CD4-positive, alpha-beta T cell (primary cell): ENCODE measurements at regions of chr6 and their contacts with region 1.

Region 1: GRCh38 chr6:24949020-24949569 is 13.3 kb upstream of the RIPOR2 start:
- DNase-seq: peak in 12 of 14 experiments; percentile 38 to 89 (median 58)
- ATAC-seq: peak; percentile 45
- H3K4me3 ChIP-seq: peak overlapping the region; percentile 5
- H3K4me3 Mint-ChIP-seq: peak overlapping the region; percentile 50
- H3K27ac ChIP-seq: peak overlapping the region; percentile 56 to 70
- H3K27ac Mint-ChIP-seq: peak overlapping the region; percentile 91
- H3K4me1 ChIP-seq: peaks cover 62% of the 10 kb centered on the region
- H3K4me1 Mint-ChIP-seq: peaks cover 87% of the 10 kb centered on the region
- H3K27me3 ChIP-seq: no peaks in the 10 kb centered on the region
- H3K27me3 Mint-ChIP-seq: no peaks in the 10 kb centered on the region
- CTCF ChIP-seq: no peak

Region 2: GRCh38 chr6:24296944-24297343 is 652.2 kb before region 1 on chr6:
- CTCF ChIA-PET with region 1: no interaction called
- POLR2A ChIA-PET with region 1: no interaction called
- intact Hi-C with region 1: no loop called
- DNase-seq: no peak
- ATAC-seq: no peak
- H3K4me3 ChIP-seq: no peak overlapping the region
- H3K4me3 Mint-ChIP-seq: no peak overlapping the region
- H3K27ac ChIP-seq: no peak overlapping the region
- H3K27ac Mint-ChIP-seq: no peak overlapping the region
- H3K4me1 ChIP-seq: no peaks in the 10 kb centered on the region
- H3K4me1 Mint-ChIP-seq: no peaks in the 10 kb centered on the region
- H3K27me3 ChIP-seq: peaks cover 4 to 11% of the 10 kb centered on the region in 2 experiments
- H3K27me3 Mint-ChIP-seq: peaks cover 22% of the 10 kb centered on the region
- CTCF ChIP-seq: no peak

Region 3: GRCh38 chr6:24902782-24903181 is 46.3 kb before region 1 on chr6:
- CTCF ChIA-PET with region 1: no interaction called
- POLR2A ChIA-PET with region 1: interaction called, 13 read pairs
- intact Hi-C with region 1: loop called in 1 of 2 experiments (anchors 5 kb)
- DNase-seq: no peak
- ATAC-seq: no peak
- H3K4me3 ChIP-seq: no peak overlapping the region
- H3K4me3 Mint-ChIP-seq: peak overlapping the region; percentile 36
- H3K27ac ChIP-seq: peak overlapping the region; percentile 31 to 39
- H3K27ac Mint-ChIP-seq: peak overlapping the region; percentile 97
- H3K4me1 ChIP-seq: peaks cover 70% of the 10 kb centered on the region
- H3K4me1 Mint-ChIP-seq: peaks cover 99% of the 10 kb centered on the region
- H3K27me3 ChIP-seq: no peaks in the 10 kb centered on the region
- H3K27me3 Mint-ChIP-seq: no peaks in the 10 kb centered on the region
- CTCF ChIP-seq: no peak

Region 4: DNA sequence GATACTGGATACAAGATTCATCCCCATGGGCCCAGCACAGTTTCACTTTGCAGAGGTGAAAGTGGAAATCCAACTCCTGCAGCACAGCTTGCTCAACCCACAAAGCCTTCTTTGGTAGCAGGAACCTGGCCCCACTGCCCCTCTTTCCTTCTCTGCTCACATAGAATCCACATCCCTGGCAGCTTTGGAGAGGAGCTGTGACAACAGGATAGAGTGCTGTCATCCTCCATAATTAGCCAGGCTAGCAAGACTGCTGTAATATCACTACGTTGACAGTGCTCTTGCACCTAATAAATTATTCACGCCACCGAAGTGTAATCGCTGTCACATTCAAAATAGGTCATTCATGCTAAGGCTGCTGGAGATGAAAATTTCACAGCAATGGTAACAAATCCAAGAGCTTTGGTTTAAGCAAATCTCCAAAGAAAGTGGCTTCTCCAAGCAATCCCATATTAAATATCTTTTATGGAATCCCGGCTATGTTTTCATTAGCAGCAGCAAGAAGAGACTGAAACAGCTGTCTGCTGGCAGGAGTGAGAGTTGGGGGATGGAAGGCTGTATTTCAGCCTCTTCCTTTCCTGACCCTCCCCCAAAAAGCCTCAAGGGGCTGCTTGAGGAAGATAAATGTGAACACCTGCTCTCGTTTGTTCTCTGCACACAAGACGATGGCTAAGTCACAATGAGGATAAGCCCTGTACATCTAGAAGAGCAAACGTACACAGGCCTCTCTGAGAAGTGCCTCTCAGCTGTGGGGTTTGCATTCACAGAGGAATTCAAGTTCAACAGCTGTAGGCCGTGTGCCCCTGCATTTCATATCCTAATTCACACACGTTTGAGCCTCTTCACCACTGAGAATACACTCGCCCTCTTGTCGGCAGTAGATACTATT is 29.8 kb before region 1 on chr6:
- CTCF ChIA-PET with region 1: no interaction called
- POLR2A ChIA-PET with region 1: interaction called, 1,043 read pairs
- intact Hi-C with region 1: loop called in 1 of 2 experiments (anchors 5 kb)
- DNase-seq: peak in 1 of 14 experiments; percentile 37
- ATAC-seq: peak; percentile 33
- H3K4me3 ChIP-seq: peak overlapping the region; percentile 17
- H3K4me3 Mint-ChIP-seq: peak overlapping the region; percentile 81
- H3K27ac ChIP-seq: peak overlapping the region; percentile 38 to 73
- H3K27ac Mint-ChIP-seq: peak overlapping the region; percentile 97
- H3K4me1 ChIP-seq: peaks cover 90% of the 10 kb centered on the region
- H3K4me1 Mint-ChIP-seq: peaks cover 93% of the 10 kb centered on the region
- H3K27me3 ChIP-seq: no peaks in the 10 kb centered on the region
- H3K27me3 Mint-ChIP-seq: no peaks in the 10 kb centered on the region
- CTCF ChIP-seq: no peak

Region 5: GRCh38 chr6:24966381-24966780 is 17.3 kb after region 1 on chr6:
- CTCF ChIA-PET with region 1: no interaction called
- POLR2A ChIA-PET with region 1: interaction called, 59 read pairs
- intact Hi-C with region 1: loop called (anchors 1 to 2 kb)
- DNase-seq: no peak
- ATAC-seq: no peak
- H3K4me3 ChIP-seq: no peak overlapping the region
- H3K4me3 Mint-ChIP-seq: no peak overlapping the region
- H3K27ac ChIP-seq: no peak overlapping the region
- H3K27ac Mint-ChIP-seq: no peak overlapping the region
- H3K4me1 ChIP-seq: peaks cover 69% of the 10 kb centered on the region
- H3K4me1 Mint-ChIP-seq: peaks cover 93% of the 10 kb centered on the region
- H3K27me3 ChIP-seq: no peaks in the 10 kb centered on the region
- H3K27me3 Mint-ChIP-seq: no peaks in the 10 kb centered on the region
- CTCF ChIP-seq: no peak

Region 6: GRCh38 chr6:24980507-24981387 is 31.7 kb after region 1 on chr6:
- CTCF ChIA-PET with region 1: no interaction called
- POLR2A ChIA-PET with region 1: interaction called, 12 read pairs
- intact Hi-C with region 1: no loop called
- DNase-seq: peak in 1 of 14 experiments; percentile 25
- ATAC-seq: peak; percentile 43
- H3K4me3 ChIP-seq: no peak overlapping the region
- H3K4me3 Mint-ChIP-seq: peak overlapping the region; percentile 11
- H3K27ac ChIP-seq: no peak overlapping the region
- H3K27ac Mint-ChIP-seq: peak overlapping the region; percentile 3
- H3K4me1 ChIP-seq: peaks cover 31% of the 10 kb centered on the region
- H3K4me1 Mint-ChIP-seq: peaks cover 78% of the 10 kb centered on the region
- H3K27me3 ChIP-seq: no peaks in the 10 kb centered on the region
- H3K27me3 Mint-ChIP-seq: no peaks in the 10 kb centered on the region
- CTCF ChIP-seq: no peak